ENCODE measurements at regions of chr7 and their contacts with region 1.

Region 1: DNA sequence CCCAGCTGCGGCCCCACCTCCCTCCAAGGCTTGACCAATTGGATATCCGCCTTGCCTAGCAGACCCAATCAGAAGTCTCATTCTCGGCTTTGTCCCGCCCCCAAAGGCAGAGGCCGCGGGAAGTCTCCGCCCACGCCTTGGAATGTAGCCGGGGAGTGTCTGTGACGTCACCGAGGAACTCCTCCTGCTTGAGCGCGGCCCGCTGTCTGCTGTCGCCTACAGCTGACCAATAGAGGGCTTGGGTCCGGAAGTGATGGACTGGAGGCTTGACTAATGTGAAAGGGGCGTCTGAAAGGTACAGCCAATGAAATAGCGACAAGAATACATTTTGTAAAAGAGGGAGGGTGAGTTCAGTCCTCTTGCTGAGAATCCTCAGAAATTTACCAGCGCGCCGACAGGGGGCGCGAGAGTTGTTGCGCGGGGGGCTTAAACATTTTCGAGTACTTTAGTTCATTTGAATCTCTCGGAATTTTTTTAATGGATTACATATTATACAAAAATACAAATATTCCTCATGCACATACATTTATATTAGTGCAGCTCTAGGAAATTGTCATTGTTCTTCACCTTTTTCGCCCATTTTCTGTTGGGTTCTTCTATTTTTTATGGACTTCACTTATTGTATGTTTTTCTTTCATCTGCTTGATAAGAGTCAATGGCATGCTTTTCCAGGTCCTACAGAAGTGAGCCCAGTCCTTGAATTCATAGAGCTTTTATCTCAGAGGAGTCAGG is 376 bp upstream of the CREB3L2 start:
- DNase-seq: peak; percentile 99
- H3K4me3 ChIP-seq: peak overlapping the region; percentile 100
- H3K27ac ChIP-seq: peak overlapping the region; percentile 99
- H3K27me3 ChIP-seq: no peaks in the 10 kb centered on the region
- CTCF ChIP-seq: peak; percentile 89

Region 2: GRCh38 chr7:137606061-137606674 is 396.1 kb before region 1 on chr7:
- in situ Hi-C with region 1: loop called (anchors 25 kb)
- DNase-seq: no peak
- H3K4me3 ChIP-seq: no peak overlapping the region
- H3K27ac ChIP-seq: no peak overlapping the region
- H3K27me3 ChIP-seq: no peaks in the 10 kb centered on the region
- CTCF ChIP-seq: no peak

Region 3: GRCh38 chr7:137656227-137656849 is 345.9 kb before region 1 on chr7:
- in situ Hi-C with region 1: no loop called
- DNase-seq: peak; percentile 83
- H3K4me3 ChIP-seq: no peak overlapping the region
- H3K27ac ChIP-seq: no peak overlapping the region
- H3K27me3 ChIP-seq: no peaks in the 10 kb centered on the region
- CTCF ChIP-seq: peak; percentile 87

Region 4: GRCh38 chr7:138278601-138279000 is 276.3 kb after region 1 on chr7:
- in situ Hi-C with region 1: no loop called
- DNase-seq: peak; percentile 28
- H3K4me3 ChIP-seq: no peak overlapping the region
- H3K27ac ChIP-seq: no peak overlapping the region
- H3K27me3 ChIP-seq: no peaks in the 10 kb centered on the region
- CTCF ChIP-seq: no peak